GM12878 (cell line): ENCODE measurements at regions of chr10 and their contacts with region 1.

Region 1: GRCh38 chr10:62610649-62611229 is 193.8 kb upstream of the ADO start:
- DNase-seq: no peak
- ATAC-seq: peak; percentile 90
- H3K4me3 ChIP-seq: no peak overlapping the region
- H3K27ac ChIP-seq: no peak overlapping the region
- H3K4me1 ChIP-seq: peaks cover 30% of the 10 kb centered on the region
- H3K27me3 ChIP-seq: no peaks in the 10 kb centered on the region
- CTCF ChIP-seq: peak; percentile 90 to 99 (median 96)
- EP300 ChIP-seq: 0 out of 4 replicates have a peak, but pooled peaks have one; percentile 7 to 30
- POLR2A ChIP-seq: no peak
- RAD21 ChIP-seq: peak; percentile 99

Region 2: GRCh38 chr10:62422068-62422590 is 188.6 kb before region 1 on chr10:
- CTCF ChIA-PET with region 1: no interaction called
- POLR2A ChIA-PET with region 1: no interaction called
- RAD21 ChIA-PET with region 1: no interaction called
- SMC1A ChIA-PET with region 1: no interaction called
- in situ Hi-C with region 1: no loop called
- intact Hi-C with region 1: no loop called
- DNase-seq: no peak
- ATAC-seq: no peak
- H3K4me3 ChIP-seq: no peak overlapping the region
- H3K27ac ChIP-seq: no peak overlapping the region
- H3K4me1 ChIP-seq: no peaks in the 10 kb centered on the region
- H3K27me3 ChIP-seq: no peaks in the 10 kb centered on the region
- CTCF ChIP-seq: no peak
- EP300 ChIP-seq: no peak
- POLR2A ChIP-seq: no peak
- RAD21 ChIP-seq: no peak

Region 3: DNA sequence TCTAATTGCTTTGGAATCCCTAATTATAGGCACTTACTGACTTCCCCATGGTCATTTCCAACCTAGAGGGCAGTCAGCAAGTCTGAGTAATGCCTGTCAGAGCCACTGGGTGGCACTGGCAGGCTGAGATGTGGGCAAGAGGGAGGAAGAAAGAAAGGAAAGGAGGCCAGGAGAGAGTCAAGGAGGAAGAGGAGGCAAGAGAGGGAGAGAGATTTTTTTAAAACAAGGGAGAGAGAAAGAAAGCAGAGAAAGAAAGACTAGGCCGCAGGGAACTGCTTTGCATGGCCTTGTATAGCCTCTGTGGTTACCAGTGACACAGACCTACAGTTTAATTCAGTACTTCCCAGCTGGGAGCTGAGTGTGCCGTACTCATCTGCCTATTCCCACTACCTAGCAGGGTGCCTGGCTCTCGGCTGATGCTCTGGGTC is 16.6 kb before region 1 on chr10:
- CTCF ChIA-PET with region 1: interaction called, 35 read pairs
- POLR2A ChIA-PET with region 1: no interaction called
- RAD21 ChIA-PET with region 1: interaction called, 21 read pairs
- SMC1A ChIA-PET with region 1: interaction called, 46 read pairs
- in situ Hi-C with region 1: no loop called
- intact Hi-C with region 1: no loop called
- DNase-seq: peak; percentile 30
- ATAC-seq: peak; percentile 94
- H3K4me3 ChIP-seq: no peak overlapping the region
- H3K27ac ChIP-seq: no peak overlapping the region
- H3K4me1 ChIP-seq: peaks cover 7% of the 10 kb centered on the region
- H3K27me3 ChIP-seq: no peaks in the 10 kb centered on the region
- CTCF ChIP-seq: peak; percentile 90 to 97 (median 95)
- EP300 ChIP-seq: no peak
- POLR2A ChIP-seq: no peak
- RAD21 ChIP-seq: peak; percentile 100

Region 4: DNA sequence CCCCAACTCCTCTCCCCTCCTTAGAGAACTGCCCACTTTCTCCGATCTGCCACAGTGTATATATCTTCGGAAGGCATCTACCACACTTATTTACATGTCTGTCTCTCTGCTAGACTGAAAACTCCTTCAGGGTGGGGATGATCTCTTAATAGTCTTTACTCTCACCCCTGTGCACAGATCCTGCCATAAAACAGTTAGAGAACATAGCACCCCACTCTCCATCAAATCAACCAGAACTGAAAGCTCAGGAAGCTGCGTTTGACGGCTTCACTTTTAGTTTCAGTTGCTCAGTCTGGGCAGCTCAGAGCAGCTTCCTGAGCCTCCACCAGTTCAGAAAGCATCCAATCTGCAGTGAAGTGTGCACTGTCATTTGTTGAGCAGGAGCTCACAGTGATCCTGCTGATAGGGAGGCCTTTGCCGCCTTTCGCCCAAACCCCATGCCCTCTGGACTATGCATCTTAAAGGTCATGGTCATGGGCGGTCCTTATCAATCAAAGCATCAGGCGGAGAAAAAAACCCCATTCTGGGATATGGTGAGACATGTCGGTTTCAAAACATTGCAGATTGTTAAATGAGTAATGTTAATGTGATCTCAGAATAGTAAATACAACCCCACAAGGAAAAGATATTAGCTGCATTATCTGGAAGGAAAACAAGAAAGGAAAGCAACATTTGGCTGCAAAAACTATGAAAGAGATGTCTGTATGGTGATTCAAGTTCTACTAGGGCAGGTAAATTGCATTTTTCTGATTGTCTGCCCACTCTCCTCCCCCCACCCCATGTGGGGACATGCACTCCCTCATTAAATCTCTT is 26.7 kb after region 1 on chr10:
- CTCF ChIA-PET with region 1: interaction called, 21 read pairs
- POLR2A ChIA-PET with region 1: interaction called, 5 read pairs
- RAD21 ChIA-PET with region 1: interaction called, 11 read pairs
- SMC1A ChIA-PET with region 1: interaction called, 122 read pairs
- in situ Hi-C with region 1: no loop called
- intact Hi-C with region 1: no loop called
- DNase-seq: peak; percentile 81
- ATAC-seq: peak; percentile 79
- H3K4me3 ChIP-seq: peak overlapping the region; percentile 12
- H3K27ac ChIP-seq: peak overlapping the region; percentile 95
- H3K4me1 ChIP-seq: peaks cover 85% of the 10 kb centered on the region
- H3K27me3 ChIP-seq: no peaks in the 10 kb centered on the region
- CTCF ChIP-seq: no peak
- EP300 ChIP-seq: peak; percentile 23 to 60; a peak in 3 of 4 replicates
- POLR2A ChIP-seq: peak; percentile 61
- RAD21 ChIP-seq: no peak

Region 5: DNA sequence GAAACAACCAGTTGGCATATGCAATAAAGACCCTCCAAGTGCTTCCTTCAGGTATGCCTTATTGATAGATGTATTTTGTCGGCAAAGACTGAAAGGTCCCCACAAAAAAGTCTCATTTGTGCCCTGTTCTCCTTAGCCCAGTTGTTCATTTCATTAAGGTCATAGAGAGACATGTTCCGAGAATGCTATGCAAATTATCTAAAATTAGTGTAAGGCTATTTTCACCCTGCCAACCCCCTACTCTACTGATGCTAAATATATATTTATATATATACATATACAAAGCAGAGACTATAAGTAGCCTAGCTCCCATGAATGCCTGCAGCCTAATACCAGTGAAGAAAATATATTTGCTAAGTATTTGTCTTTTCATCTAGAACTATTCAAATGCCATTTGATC is 97.1 kb after region 1 on chr10:
- CTCF ChIA-PET with region 1: interaction called, 4 read pairs
- POLR2A ChIA-PET with region 1: no interaction called
- RAD21 ChIA-PET with region 1: interaction called, 6 read pairs
- SMC1A ChIA-PET with region 1: interaction called, 6 read pairs
- in situ Hi-C with region 1: no loop called
- intact Hi-C with region 1: loop called (anchors 5 kb)
- DNase-seq: peak; percentile 40
- ATAC-seq: peak; percentile 76
- H3K4me3 ChIP-seq: peak overlapping the region; percentile 9; the same call in 1 of the 2 replicates
- H3K27ac ChIP-seq: peak overlapping the region; percentile 61; the same call in 1 of the 2 replicates
- H3K4me1 ChIP-seq: peaks cover 30% of the 10 kb centered on the region
- H3K27me3 ChIP-seq: no peaks in the 10 kb centered on the region
- CTCF ChIP-seq: no peak
- EP300 ChIP-seq: peak; percentile 9 to 76; a peak in 2 of 4 replicates
- POLR2A ChIP-seq: no peak
- RAD21 ChIP-seq: 0 out of 2 replicates have a peak, but pooled peaks have one; percentile 20

Region 6: GRCh38 chr10:62769574-62770242 is 159.0 kb after region 1 on chr10:
- CTCF ChIA-PET with region 1: interaction called, 12 read pairs
- POLR2A ChIA-PET with region 1: no interaction called
- RAD21 ChIA-PET with region 1: interaction called, 4 read pairs
- SMC1A ChIA-PET with region 1: interaction called, 5 read pairs
- in situ Hi-C with region 1: no loop called
- intact Hi-C with region 1: no loop called
- DNase-seq: no peak
- ATAC-seq: peak; percentile 87
- H3K4me3 ChIP-seq: no peak overlapping the region
- H3K27ac ChIP-seq: peak overlapping the region; percentile 56
- H3K4me1 ChIP-seq: peaks cover 31% of the 10 kb centered on the region
- H3K27me3 ChIP-seq: no peaks in the 10 kb centered on the region
- CTCF ChIP-seq: no peak
- EP300 ChIP-seq: no peak
- POLR2A ChIP-seq: no peak
- RAD21 ChIP-seq: no peak

Region 7: DNA sequence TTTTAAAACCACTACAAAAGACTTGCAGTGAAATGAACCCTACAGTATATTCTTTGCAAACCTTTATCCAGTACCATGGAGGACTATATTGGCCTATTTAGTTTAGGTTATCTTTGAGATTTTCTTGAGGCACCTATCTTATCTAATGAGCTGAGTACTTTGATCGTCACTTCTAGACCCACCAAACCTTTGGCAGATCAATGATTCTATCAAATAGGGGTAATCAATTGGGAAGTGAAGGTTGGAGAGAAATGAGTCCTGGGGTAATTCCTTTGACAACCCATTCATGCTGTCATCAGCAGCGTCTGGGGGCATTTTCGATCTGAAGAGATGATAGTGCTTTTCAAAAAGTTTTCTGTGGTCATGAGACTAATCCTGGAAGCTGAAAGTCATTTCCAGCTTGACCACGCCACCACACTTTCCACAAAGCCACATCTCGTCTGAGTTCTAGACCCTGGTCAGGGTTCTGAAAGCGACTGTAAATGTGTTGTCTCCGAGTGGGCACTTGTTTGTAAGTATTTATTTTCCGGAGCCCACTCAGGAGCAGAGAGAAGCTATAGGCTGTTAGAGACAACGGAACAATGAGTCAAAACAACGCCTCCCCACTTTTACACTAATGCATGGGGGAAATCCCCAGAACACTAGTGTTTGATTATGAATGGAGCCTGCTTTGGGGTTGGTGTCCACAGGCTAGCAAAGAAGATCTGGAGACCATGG is 200.6 kb after region 1 on chr10:
- CTCF ChIA-PET with region 1: interaction called, 123 read pairs
- POLR2A ChIA-PET with region 1: interaction called, 12 read pairs
- RAD21 ChIA-PET with region 1: interaction called, 132 read pairs
- SMC1A ChIA-PET with region 1: interaction called, 131 read pairs
- in situ Hi-C with region 1: loop called (anchors 5 kb)
- intact Hi-C with region 1: loop called (anchors 1 kb)
- DNase-seq: peak; percentile 85
- ATAC-seq: peak; percentile 62
- H3K4me3 ChIP-seq: peak overlapping the region; percentile 25; the same call in 1 of the 2 replicates
- H3K27ac ChIP-seq: peak overlapping the region; percentile 42; the same call in 1 of the 2 replicates
- H3K4me1 ChIP-seq: peaks cover 20% of the 10 kb centered on the region
- H3K27me3 ChIP-seq: no peaks in the 10 kb centered on the region
- CTCF ChIP-seq: no peak
- EP300 ChIP-seq: peak; percentile 80 to 86; a peak in 3 of 4 replicates
- POLR2A ChIP-seq: 0 out of 2 replicates have a peak, but pooled peaks have one; percentile 21
- RAD21 ChIP-seq: 0 out of 2 replicates have a peak, but pooled peaks have one; percentile 6

Region 8: GRCh38 chr10:63157845-63158624 is 547.3 kb after region 1 on chr10:
- CTCF ChIA-PET with region 1: interaction called, 37 read pairs
- POLR2A ChIA-PET with region 1: no interaction called
- RAD21 ChIA-PET with region 1: interaction called, 22 read pairs
- SMC1A ChIA-PET with region 1: interaction called, 17 read pairs
- in situ Hi-C with region 1: no loop called
- intact Hi-C with region 1: loop called (anchors 5 kb)
- DNase-seq: peak; percentile 49
- ATAC-seq: peak; percentile 89
- H3K4me3 ChIP-seq: no peak overlapping the region
- H3K27ac ChIP-seq: 0 out of 2 replicates have a peak overlapping the region, but pooled peaks have one; percentile 31
- H3K4me1 ChIP-seq: peaks cover 3% of the 10 kb centered on the region; the same call in 1 of the 2 replicates
- H3K27me3 ChIP-seq: no peaks in the 10 kb centered on the region
- CTCF ChIP-seq: peak; percentile 70 to 86 (median 74); a peak in 5 of 6 replicates
- EP300 ChIP-seq: no peak
- POLR2A ChIP-seq: no peak
- RAD21 ChIP-seq: peak; percentile 97